Prostate gland (tissue), 2 donors: ENCODE measurements at regions of chr16 and their contacts with region 1.

Region 1: GRCh38 chr16:2537453-2538379 is at the start of gene PDPK1:
- DNase-seq: peak; percentile 93
- H3K4me3 ChIP-seq: peak within 1 kb of the TSS; percentile 65 to 69
- H3K27ac ChIP-seq: peak within 1 kb of the TSS; percentile 85 to 86
- H3K4me1 ChIP-seq: no peaks in the 10 kb centered on the region
- H3K27me3 ChIP-seq: no peaks in the 10 kb centered on the region
- CTCF ChIP-seq: peak in 1 of 4 experiments; percentile 22
- POLR2A ChIP-seq: peak; percentile 59
- total RNA-seq, gene PDPK1: 33.1 to 73.2 TPM

Region 2: DNA sequence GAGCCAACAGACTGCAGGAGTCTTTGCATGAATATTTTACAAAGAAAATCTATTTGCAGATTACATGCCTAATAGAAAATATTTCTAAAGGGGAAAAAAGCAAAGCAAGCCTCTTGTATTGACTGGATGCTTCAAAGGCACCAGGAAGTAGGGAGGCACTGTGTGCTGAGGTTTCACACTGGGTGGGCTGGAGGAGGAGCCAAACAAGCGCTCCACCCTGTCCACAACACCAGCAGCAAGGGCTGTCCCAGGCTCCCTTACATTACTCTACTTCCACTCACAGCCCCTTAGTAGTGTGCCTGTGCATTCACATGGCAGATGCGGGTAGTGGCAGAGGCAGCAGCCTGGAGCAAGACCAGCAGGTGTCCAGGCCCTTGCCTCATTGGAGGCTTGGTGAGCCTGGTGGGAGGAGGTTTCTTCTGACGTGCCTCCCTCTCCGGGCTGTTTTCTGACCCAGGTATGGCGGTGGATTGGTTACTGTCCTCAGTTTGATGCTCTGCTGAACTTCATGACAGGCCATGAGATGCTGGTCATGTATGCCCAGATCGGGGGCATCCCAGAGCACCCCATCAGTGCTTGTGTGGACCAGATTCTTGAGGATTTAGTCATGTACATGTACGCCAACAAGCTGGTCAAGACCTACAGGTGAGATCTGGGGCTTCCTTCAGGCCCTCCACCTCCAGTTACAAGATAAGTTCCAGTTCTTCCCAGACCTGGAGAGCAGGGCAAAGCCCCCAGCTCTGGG is 115.4 kb before region 1 on chr16:
- intact Hi-C with region 1: no loop called
- DNase-seq: no peak
- H3K4me3 ChIP-seq: no peak overlapping the region
- H3K27ac ChIP-seq: no peak overlapping the region
- H3K4me1 ChIP-seq: no peaks in the 10 kb centered on the region
- H3K27me3 ChIP-seq: no peaks in the 10 kb centered on the region
- CTCF ChIP-seq: no peak
- POLR2A ChIP-seq: no peak

Region 3: DNA sequence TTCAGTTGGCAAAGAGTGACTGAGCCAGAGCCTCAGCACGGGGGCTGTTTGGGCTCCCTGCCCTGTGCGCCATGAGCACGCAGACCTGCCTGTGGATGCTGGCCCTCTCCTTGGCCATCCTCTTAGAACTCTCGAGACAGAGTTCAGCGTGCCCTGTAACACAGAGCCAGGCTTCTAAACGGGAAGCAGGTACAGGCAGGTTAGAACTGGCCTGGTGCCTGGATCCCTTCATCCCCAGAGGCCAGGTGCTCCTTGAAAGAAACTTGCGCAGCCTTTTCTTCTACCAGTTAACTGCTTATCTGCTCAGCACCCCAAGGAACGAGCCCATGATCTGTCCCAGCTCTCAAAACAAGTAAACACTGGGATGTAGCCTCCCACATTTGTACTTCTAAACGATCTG is 101.6 kb before region 1 on chr16:
- intact Hi-C with region 1: no loop called
- DNase-seq: peak; percentile 65
- H3K4me3 ChIP-seq: no peak overlapping the region
- H3K27ac ChIP-seq: no peak overlapping the region
- H3K4me1 ChIP-seq: no peaks in the 10 kb centered on the region
- H3K27me3 ChIP-seq: no peaks in the 10 kb centered on the region
- CTCF ChIP-seq: no peak
- POLR2A ChIP-seq: no peak

Region 4: DNA sequence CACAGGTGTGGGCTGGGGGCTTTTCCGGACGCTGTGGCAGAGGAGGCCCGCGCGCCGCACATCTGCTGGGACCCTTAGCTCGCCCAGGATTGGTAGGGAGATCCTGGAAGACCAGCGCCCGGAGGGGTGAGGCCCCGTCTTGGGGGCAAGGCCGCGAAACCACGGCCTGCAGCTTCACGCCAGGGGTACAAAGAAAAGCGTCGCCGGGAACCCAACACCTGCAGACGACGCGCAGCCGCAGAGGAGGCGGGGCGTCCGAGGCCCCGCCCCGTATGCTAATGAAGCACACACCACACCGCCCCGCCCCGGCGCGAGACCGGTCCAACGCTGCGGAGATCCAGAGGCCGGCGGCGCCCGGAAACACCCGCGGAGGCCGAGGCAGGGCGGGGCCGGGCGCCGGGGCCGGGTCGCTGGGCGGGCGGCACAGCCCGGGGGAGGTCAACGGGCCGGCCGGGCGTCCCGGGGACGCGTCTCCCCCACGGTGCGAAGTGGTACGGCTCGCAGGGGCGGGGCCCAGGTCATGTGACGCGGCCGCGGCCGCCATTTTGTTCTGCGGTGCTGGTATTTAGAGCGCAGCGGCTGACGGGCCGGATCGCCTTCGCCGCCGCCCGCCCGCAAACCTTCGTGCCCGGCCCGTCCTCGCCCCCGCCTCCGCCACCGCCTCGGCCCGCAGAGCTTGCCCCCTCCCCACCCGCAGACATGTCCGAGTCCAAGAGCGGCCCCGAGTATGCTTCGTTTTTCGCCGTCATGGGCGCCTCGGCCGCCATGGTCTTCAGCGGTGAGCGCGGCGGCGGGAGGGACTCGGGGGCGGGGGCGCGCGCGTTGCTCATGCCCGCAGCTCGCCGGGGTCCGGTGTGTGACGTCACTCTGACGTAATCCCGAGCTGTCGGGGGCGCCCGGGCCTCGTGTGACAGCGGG is 24.1 kb before region 1 on chr16 and contains the start of gene ATP6V0C:
- intact Hi-C with region 1: loop called (anchors 2 kb)
- DNase-seq: peak; percentile 92
- H3K4me3 ChIP-seq: peak within 1 kb of the TSS; percentile 100
- H3K27ac ChIP-seq: peak within 1 kb of the TSS; percentile 98
- H3K4me1 ChIP-seq: peaks cover 22% of the 10 kb centered on the region
- H3K27me3 ChIP-seq: no peaks in the 10 kb centered on the region
- CTCF ChIP-seq: no peak
- POLR2A ChIP-seq: peak; percentile 88
- total RNA-seq, gene ATP6V0C: 114 to 164 TPM

Region 5: DNA sequence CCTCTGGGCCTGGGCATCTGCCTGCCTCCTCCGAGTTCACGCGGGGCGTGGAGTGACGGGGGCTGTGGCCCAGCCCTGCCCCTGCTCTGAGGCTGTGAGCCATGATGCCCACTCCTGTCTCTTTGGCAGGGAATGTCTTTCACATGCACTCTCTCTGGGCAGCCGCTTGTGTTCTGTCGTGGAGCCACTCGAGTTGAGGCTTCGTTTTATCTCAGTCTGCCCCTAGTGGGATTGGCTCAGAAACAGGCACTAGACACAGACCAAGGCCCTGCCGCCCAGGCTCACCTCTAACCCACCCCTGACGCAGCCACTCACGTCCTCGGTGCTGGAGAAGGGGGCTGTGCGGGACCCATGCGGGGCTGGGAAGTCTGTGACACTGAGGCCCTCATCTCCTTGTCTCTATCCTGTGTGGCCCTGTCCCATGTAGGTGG is 77.1 kb after region 1 on chr16:
- intact Hi-C with region 1: no loop called
- DNase-seq: peak; percentile 3
- H3K4me3 ChIP-seq: no peak overlapping the region
- H3K27ac ChIP-seq: no peak overlapping the region
- H3K4me1 ChIP-seq: no peaks in the 10 kb centered on the region
- H3K27me3 ChIP-seq: no peaks in the 10 kb centered on the region
- CTCF ChIP-seq: no peak
- POLR2A ChIP-seq: no peak

Region 6: DNA sequence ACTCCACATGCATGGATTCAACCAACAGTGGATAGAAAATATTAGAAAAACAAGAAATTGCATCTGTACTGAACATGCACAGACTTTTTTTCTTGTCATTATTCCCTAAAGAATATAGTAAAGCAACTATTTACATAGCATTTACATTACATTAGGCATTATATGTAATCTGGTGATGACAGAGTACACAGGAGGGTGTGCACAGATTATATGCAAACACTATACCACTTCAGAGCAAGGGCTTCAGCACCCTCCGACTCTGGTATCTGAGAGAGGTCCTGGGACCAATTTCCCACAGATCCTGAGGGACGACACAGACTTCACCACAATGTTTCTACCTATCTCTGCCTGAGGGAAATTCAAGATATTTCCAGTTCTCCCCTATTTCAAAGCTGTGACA is 119.3 kb after region 1 on chr16:
- intact Hi-C with region 1: no loop called
- DNase-seq: no peak
- H3K4me3 ChIP-seq: no peak overlapping the region
- H3K27ac ChIP-seq: no peak overlapping the region
- H3K4me1 ChIP-seq: no peaks in the 10 kb centered on the region
- H3K27me3 ChIP-seq: no peaks in the 10 kb centered on the region
- CTCF ChIP-seq: no peak
- POLR2A ChIP-seq: no peak

Region 7: DNA sequence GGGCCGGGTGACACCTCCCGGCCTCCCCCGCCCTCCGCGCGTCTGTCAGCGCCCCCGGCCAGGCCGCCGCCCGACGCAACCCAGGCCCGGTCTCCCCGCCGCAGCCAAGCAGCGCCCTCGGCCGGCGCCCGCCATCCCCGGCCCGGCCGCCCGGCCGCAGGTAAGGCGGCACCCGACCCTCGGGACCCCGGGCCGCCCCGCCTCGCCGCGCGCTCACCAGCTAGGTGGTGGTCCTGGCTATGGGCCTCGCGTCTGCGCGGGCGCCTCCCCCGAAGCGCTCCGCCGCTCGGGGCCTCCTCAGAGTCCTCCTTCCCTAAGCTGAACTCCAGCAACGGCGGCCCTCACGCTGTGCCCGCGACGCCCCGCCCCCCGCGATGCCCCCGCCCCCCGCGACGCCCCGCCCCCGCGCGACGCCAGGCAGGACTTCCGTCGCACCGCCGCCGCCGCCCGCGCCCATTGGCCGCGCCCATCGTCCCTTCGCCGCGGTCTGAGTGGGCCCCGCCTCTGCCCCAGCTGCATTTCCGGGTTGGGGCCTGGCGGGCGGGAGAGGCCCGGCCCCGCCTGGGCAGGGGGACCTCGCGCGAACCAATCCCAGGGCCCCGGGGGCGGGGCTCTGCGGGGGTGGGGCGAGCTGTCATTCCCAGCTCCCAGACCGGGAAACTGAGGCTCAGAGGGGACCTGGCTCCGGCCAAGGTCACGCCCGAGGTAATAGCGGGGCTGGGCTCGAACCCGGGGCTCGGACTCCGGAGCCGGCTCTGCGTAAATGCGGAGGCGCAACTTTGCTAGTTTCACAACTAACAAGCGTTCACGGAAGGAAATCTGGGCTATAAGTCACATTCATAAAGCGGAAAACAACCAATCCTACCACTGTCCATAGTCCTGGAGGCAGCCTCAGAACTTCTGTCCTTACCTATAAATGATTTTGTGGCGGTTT is 135.6 kb after region 1 on chr16:
- intact Hi-C with region 1: loop called (anchors 5 kb)
- DNase-seq: peak; percentile 94
- H3K4me3 ChIP-seq: peak overlapping the region; percentile 43 to 58
- H3K27ac ChIP-seq: peak overlapping the region; percentile 74 to 77
- H3K4me1 ChIP-seq: peaks cover 6% of the 10 kb centered on the region
- H3K27me3 ChIP-seq: no peaks in the 10 kb centered on the region
- CTCF ChIP-seq: no peak
- POLR2A ChIP-seq: peak; percentile 79